ENCODE measurements at regions of chr16 and their contacts with region 1.

Region 1: GRCh38 chr16:981695-982144 is at the start of gene SOX8:
- DNase-seq: no peak
- H3K4me3 ChIP-seq: peak within 1 kb of the TSS; percentile 57
- H3K27ac ChIP-seq: no peak within 1 kb of the TSS
- H3K4me1 ChIP-seq: peaks cover 8% of the 10 kb centered on the region
- H3K27me3 ChIP-seq: peaks cover 20% of the 10 kb centered on the region
- CTCF ChIP-seq: no peak
- total RNA-seq, gene SOX8: 1.4 and 2.0 TPM in 2 replicates

Region 2: DNA sequence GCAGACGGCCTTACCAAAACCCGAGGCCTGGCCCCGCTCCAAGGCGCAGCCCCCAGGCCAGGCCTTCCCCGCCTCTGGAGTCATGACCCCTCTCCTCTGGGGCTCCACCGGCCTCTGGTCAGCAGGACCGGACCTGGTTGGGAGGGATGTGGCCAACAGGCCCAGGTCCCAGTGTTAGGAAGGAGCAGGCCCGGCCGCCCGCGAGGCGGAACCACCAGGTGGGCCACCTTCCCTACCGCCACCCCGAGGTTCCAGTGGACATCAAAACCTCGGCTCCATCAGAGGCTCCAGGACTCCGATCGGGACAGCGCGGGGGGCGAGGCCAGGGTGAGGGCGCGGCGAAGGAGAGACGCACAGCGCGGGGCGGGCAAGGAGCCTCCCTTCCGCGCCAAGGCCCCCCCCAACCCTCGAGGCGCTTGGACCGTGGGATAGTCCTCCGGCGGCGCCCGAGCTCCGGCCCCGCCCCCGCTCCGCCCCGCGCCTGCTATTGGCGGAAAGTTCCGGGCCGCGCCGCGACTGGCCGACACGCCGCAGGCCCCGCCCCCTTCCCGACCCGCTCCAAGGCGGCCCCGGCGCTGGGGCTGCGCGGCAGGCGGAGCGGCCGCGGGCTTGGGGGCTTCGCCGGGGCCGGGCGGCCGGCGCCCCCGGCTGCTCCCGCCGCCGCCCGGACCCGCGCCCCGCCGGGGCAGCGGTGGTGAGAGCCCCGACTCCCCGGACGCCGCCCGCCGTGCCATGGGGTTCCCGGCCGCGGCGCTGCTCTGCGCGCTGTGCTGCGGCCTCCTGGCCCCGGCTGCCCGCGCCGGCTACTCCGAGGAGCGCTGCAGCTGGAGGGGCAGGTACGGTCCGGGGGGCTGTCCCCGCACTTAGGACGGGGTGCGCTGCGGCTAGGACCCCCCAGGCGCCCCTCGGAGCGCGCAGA is 266.9 kb before region 1 on chr16 and contains the start of gene METRN:
- CTCF ChIA-PET with region 1: interaction called, 12 read pairs
- POLR2A ChIA-PET with region 1: no interaction called
- intact Hi-C with region 1: no loop called
- DNase-seq: peak; percentile 92
- H3K4me3 ChIP-seq: peak within 1 kb of the TSS; percentile 32
- H3K27ac ChIP-seq: no peak within 1 kb of the TSS
- H3K4me1 ChIP-seq: peaks cover 2% of the 10 kb centered on the region
- H3K27me3 ChIP-seq: peaks cover 32% of the 10 kb centered on the region
- CTCF ChIP-seq: no peak
- total RNA-seq, gene METRN: 0.86 and 1.8 TPM in 2 replicates

Region 3: DNA sequence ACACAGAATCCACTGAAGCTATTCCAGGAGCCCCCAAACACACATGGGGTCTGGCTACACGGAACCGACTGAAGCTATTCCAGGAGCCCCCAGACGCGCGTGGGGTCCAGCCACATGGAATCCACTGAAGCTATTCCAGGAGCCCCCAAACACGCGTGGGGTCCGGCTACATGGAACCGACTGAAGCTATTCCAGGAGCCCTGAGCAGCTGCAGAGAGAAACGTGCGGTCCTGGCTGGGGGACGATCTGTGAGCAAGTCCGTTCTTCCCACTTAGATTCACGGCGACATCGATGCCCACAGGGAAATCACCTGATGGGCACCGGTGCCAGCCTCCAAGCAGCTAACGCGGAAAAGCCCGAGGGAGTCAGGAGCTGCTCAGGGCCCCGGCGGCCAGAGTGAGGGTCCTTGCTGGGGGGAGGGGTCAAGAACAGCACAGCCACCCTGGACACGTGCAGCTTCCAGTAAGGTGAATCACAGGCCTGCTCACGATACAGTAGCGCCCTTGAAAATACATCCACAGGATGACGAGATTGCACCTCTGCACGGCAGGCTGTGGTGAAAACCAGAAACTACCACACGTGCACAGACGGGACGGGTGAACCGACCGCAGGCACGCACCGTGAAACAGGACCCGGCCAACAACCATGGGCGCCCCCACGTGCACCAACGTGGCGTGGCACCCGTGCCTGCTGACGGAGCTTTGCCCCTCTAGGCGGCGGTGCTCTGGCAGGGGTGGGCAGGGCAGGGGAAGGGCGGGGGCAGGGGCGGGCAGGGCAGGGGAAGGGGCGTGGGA is 103.5 kb before region 1 on chr16:
- CTCF ChIA-PET with region 1: no interaction called
- POLR2A ChIA-PET with region 1: no interaction called
- intact Hi-C with region 1: no loop called
- DNase-seq: peak; percentile 49
- H3K4me3 ChIP-seq: no peak overlapping the region
- H3K27ac ChIP-seq: no peak overlapping the region
- H3K4me1 ChIP-seq: no peaks in the 10 kb centered on the region
- H3K27me3 ChIP-seq: no peaks in the 10 kb centered on the region
- CTCF ChIP-seq: peak; percentile 56

Region 4: GRCh38 chr16:1002399-1003161 is 20.9 kb after region 1 on chr16:
- CTCF ChIA-PET with region 1: no interaction called
- POLR2A ChIA-PET with region 1: no interaction called
- intact Hi-C with region 1: no loop called
- DNase-seq: peak; percentile 75
- H3K4me3 ChIP-seq: no peak overlapping the region
- H3K27ac ChIP-seq: no peak overlapping the region
- H3K4me1 ChIP-seq: peaks cover 8% of the 10 kb centered on the region
- H3K27me3 ChIP-seq: no peaks in the 10 kb centered on the region
- CTCF ChIP-seq: no peak

Region 5: GRCh38 chr16:1022466-1022865 is 40.7 kb after region 1 on chr16:
- CTCF ChIA-PET with region 1: no interaction called
- POLR2A ChIA-PET with region 1: interaction called, 11 read pairs
- intact Hi-C with region 1: no loop called
- DNase-seq: no peak
- H3K4me3 ChIP-seq: no peak overlapping the region
- H3K27ac ChIP-seq: no peak overlapping the region
- H3K4me1 ChIP-seq: peaks cover 31% of the 10 kb centered on the region
- H3K27me3 ChIP-seq: no peaks in the 10 kb centered on the region
- CTCF ChIP-seq: no peak

Measured in A673 (cell line).